Activated T-helper 1 cell treated with anti-CD3 and anti-CD28 coated beads, Interleukin-12 subunit alpha, Interleukin-12 subunit beta, Interleukin-2, Interleukin-4 antibody, amounts not matched to agents 30 ng/mL and 10 ng/mL and 1 ng/mL, durations not matched to agents 14 hours and 24 hours and 36 hours (primary cell): ENCODE measurements at regions of chr3 and their contacts with region 1.

Region 1: DNA sequence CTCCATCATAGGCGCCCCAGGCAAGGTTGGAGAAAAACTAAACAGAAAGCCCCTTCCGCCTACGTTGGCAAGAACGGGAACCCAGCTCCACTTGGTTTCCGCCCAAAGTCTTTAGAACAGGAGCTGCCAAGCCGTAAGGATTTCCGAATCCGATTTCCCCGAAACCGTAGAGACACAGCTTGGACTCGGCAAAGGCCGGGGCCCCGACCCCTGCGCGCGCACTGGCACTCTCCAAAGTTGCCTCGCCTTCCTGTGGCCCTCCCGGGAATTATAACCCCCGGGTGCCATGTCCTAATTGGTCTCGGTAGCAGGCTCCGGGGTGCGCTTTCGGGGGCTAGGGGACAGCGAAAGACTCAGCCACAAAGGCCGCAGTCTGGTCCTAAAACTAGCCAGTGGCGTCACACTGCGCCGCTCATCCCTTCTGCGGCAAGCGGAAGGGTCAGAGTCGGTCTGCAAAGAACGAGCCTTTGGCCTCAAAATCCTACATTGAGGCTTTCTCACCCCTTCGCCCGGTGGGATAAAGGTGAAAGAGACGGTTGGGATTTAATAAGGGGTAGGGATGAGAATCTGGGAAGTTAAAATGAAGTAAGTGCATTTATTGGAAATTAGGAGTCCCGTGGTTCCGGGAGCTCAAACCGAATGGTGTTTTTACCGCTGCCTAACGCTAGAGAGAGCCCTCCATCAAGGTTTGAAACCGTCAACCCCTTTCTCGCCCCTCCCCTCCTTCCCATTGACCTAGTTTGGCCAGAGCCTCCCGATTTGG is 6.8 kb downstream of the BCL6 start:
- DNase-seq: peak; percentile 67
- H3K4me3 Mint-ChIP-seq: peak overlapping the region; percentile 96
- H3K27ac Mint-ChIP-seq: peak overlapping the region; percentile 92
- H3K4me1 Mint-ChIP-seq: peaks cover 71% of the 10 kb centered on the region
- H3K27me3 Mint-ChIP-seq: no peaks in the 10 kb centered on the region

Region 2: DNA sequence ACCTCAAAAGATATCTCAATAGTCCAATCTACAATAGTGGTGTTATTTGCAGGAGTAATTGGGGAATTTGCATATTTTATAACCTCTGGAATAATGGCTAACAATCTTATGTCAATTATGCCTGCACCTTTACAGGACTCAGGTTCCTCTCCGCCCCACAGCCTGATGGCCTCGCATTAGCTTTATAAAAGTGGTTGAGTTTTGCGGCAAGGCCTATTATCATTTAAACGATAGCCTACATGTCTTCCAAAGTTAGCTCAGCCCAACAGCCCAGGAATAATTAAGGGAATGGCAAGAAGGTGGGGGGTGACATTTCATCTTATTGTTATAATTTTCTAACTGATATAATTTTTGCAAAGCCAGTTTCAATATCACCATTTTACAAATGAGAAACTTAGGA is 273.0 kb before region 1 on chr3:
- intact Hi-C with region 1: no loop called
- DNase-seq: no peak
- H3K4me3 Mint-ChIP-seq: no peak overlapping the region
- H3K27ac Mint-ChIP-seq: no peak overlapping the region
- H3K4me1 Mint-ChIP-seq: no peaks in the 10 kb centered on the region
- H3K27me3 Mint-ChIP-seq: peaks cover 2% of the 10 kb centered on the region

Region 3: GRCh38 chr3:188061133-188061532 is 322.6 kb after region 1 on chr3:
- intact Hi-C with region 1: loop called (anchors 2 kb)
- DNase-seq: peak; percentile 38
- H3K4me3 Mint-ChIP-seq: peak overlapping the region; percentile 61
- H3K27ac Mint-ChIP-seq: peak overlapping the region; percentile 87
- H3K4me1 Mint-ChIP-seq: peaks cover 53% of the 10 kb centered on the region
- H3K27me3 Mint-ChIP-seq: no peaks in the 10 kb centered on the region

Region 4: DNA sequence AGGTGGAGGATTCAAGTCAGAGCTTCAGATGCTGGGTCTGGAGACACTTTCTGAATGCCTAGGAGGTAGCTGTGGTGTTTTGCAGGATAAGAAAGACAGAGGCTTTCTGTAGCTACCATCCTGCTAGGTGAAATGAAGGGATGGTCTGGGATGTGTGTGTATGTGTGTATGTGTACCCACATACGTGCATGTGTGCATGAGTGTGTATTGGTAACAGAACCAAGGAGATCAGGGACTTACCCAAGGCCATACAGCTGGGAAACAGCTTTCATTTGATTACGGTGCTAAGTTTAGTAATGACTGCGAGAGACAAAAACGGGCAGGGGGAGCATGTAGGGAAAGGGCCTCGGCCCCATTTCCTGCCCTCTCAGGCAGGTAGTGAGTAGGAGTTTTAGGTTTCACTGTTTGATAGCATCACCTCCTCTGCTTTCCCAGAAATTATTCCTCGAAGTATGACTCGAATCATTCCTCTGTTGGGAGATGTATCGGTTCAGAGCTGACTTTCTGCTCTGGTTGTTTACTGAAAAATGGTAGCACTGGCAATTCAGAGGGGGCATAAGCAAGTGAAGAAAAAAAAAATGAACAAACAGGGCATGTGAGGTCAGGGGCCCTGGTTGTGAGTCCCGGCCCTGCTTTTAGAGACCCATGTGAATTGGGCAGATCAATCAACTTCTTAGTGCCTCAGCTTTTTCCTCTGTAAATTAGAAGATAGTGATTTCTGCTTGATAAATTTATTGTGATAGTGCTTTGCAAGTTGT is 546.1 kb after region 1 on chr3:
- intact Hi-C with region 1: loop called (anchors 1 kb)
- DNase-seq: peak; percentile 26
- H3K4me3 Mint-ChIP-seq: peak overlapping the region; percentile 57
- H3K27ac Mint-ChIP-seq: peak overlapping the region; percentile 90
- H3K4me1 Mint-ChIP-seq: peaks cover 55% of the 10 kb centered on the region
- H3K27me3 Mint-ChIP-seq: peaks cover 2% of the 10 kb centered on the region

Region 5: DNA sequence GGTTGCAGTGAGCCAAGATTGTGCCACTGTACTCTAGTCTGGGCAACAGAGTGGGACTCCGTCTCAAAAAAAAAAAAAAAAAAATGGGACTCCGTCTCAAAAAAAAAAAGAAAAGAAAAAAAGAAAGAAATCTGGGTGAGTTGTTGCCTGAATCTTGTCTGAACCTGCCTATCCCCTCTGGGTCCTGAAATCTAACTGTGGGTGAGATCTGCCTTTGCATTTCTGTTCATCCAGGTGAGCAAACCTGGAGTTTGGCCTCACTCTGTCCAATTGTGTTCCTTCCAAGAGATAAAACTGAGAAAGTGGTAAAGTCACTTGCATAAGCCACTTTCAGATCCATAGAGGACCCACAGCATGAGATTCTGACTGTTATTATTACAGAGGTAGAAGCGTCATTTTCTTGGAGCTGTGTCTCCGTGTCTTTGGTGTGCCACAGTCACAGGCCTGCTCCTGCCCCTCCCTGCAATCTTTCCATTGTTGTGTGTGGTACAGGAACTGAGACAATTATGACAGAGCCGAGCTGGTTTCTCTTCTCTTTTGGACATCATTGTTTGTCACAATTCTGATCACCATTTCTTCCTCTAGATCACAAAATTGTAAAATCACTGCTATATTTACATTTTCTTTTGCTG is 651.3 kb after region 1 on chr3:
- intact Hi-C with region 1: loop called (anchors 1 kb)
- DNase-seq: peak; percentile 33
- H3K4me3 Mint-ChIP-seq: peak overlapping the region; percentile 25
- H3K27ac Mint-ChIP-seq: peak overlapping the region; percentile 86
- H3K4me1 Mint-ChIP-seq: peaks cover 44% of the 10 kb centered on the region
- H3K27me3 Mint-ChIP-seq: peaks cover 1% of the 10 kb centered on the region

Region 6: GRCh38 chr3:188697127-188697526 is 958.6 kb after region 1 on chr3:
- intact Hi-C with region 1: loop called (anchors 1 kb)
- DNase-seq: no peak
- H3K4me3 Mint-ChIP-seq: no peak overlapping the region
- H3K27ac Mint-ChIP-seq: peak overlapping the region; percentile 18
- H3K4me1 Mint-ChIP-seq: peaks cover 36% of the 10 kb centered on the region
- H3K27me3 Mint-ChIP-seq: peaks cover 5% of the 10 kb centered on the region

Region 7: DNA sequence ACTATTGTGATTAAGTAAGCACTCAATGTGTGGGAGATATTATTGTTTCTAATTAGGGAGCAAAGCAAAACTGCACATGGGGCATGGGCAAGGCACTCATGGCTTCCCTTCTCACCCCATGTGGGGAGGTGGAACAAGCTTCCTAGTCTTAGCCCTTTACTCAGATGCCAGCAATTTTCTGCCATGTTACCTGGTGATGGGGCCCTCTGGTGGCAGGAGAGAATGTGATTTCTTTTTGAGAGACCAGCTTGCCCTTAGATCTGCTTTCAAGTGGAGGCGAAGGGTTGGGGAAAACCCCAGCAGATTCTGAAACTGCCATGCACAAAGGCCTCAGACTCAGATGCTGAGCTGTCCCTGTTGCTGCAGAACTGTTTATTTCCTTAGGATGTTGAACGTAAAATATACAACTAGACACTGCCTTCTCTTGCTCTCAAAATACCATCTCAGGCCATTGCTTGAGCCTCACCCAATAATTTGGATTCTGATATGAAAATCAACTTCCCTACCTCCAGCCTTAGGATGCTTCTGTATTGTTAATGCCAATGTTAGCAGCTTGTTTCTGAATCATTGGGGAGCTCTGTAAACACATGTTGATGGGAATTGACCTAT is 1303.1 kb after region 1 on chr3:
- intact Hi-C with region 1: loop called (anchors 1 kb)
- DNase-seq: peak; percentile 75
- H3K4me3 Mint-ChIP-seq: no peak overlapping the region
- H3K27ac Mint-ChIP-seq: no peak overlapping the region
- H3K4me1 Mint-ChIP-seq: peaks cover 56% of the 10 kb centered on the region
- H3K27me3 Mint-ChIP-seq: peaks cover 4% of the 10 kb centered on the region